ENCODE measurements at regions of chr6 and their contacts with region 1.

Region 1: DNA sequence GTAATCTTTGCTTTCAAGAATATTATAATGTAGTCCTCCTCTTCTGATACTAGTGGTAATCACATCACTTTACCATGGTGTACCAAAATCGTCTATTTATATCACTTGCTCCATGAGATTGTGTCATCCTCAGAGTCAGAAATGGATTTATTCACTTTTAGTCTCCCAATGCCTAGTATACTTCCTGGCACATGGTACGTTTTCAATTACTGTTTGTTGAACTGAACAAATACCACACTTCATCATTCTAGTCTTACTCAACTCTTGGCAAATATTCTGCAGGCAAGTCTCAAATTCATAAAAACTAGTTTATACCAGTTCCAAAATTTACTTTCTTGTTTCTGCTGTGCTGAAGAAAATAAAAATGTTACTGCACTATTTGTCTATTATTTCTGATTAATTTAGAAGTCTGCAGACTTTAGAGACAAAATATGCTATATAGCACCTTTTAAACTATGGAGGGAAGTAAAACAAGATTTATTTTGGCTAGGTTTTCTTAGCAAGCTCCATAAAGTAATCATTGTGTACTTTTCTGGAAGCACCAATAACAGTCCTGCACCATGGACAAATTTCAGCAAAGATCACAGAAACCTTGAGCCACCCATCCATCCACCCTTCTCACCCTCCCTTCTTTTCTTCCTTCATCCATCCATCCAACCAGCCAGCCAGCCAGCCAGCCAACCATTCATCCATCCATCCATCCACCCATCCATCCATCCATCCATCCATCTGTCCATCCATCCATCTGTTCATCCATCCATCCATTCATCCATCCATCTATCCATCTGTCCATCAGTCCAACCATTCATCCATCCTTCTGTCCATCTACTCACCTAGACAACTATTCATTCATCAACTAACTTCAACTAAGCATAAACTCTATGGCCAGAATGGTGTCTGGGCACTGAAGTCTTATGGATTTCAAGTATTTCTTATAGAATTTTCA is 102.1 kb upstream of the STMND1 start:
- DNase-seq: no peak
- H3K4me3 Mint-ChIP-seq: no peak overlapping the region
- H3K27ac Mint-ChIP-seq: no peak overlapping the region
- H3K4me1 Mint-ChIP-seq: no peaks in the 10 kb centered on the region
- H3K27me3 Mint-ChIP-seq: peaks cover 42% of the 10 kb centered on the region

Region 2: GRCh38 chr6:16929809-16930208 is 70.0 kb before region 1 on chr6:
- intact Hi-C with region 1: loop called (anchors 10 kb)
- DNase-seq: no peak
- H3K4me3 Mint-ChIP-seq: no peak overlapping the region
- H3K27ac Mint-ChIP-seq: no peak overlapping the region
- H3K4me1 Mint-ChIP-seq: peaks cover 2% of the 10 kb centered on the region
- H3K27me3 Mint-ChIP-seq: peaks cover 22% of the 10 kb centered on the region